ENCODE measurements at regions of chr14 and their contacts with region 1.

Region 1: GRCh38 chr14:99235582-99236320 is 36.2 kb downstream of the BCL11B start:
- DNase-seq: no peak
- ATAC-seq: no peak
- H3K4me3 Mint-ChIP-seq: peak overlapping the region; percentile 85
- H3K27ac Mint-ChIP-seq: peak overlapping the region; percentile 95
- H3K4me1 Mint-ChIP-seq: peaks cover 88% of the 10 kb centered on the region
- H3K27me3 Mint-ChIP-seq: no peaks in the 10 kb centered on the region

Region 2: DNA sequence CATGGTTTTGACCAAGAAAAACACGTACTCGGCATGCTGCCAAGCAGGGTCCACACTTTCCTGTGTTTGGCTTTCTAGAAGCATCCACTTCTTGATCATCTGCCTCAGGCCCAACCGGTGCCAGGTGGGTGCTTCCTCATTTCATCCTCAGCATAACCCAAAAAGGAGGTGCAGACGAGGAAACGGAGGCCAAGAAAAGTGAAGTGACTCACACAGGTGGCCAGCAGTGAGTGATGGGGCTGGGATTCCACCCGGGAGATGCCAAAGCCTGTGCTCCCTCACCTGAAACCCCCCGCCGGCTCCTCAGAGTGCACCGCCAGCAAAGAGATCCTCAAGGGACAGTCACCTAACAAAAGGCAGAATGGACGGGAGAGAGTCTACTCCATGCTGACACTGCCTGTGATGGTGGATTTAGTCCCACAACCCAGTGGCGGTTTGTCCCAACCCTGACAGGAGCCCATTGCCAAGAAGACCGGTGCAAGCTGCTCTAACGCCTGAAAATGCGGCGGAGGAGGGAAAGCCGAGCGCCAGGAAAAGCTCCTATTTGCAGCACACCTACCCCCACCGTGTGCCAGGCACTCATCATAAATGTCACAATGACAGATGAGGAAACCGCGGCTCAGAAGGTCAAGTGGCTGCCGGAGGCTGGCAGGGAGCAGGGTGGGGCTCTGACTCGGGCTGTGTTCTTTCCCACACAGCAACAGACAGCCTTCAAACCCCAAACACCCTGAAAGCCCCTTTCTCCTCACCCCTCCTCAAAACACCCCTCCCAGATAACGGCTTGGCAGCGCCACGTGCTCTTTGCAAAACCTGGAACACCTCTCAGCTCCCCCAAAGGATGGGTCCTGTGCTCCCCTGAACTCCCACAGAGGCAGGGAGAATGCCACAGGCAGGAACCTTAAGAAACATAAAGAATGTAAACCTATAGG is 17.5 kb after region 1 on chr14:
- POLR2A ChIA-PET with region 1: interaction called, 117 read pairs
- DNase-seq: peak; percentile 54
- ATAC-seq: peak; percentile 34
- H3K4me3 Mint-ChIP-seq: peak overlapping the region; percentile 79
- H3K27ac Mint-ChIP-seq: peak overlapping the region; percentile 95
- H3K4me1 Mint-ChIP-seq: peaks cover 84% of the 10 kb centered on the region
- H3K27me3 Mint-ChIP-seq: no peaks in the 10 kb centered on the region